Activated CD4-positive, alpha-beta memory T cell treated with anti-CD3 and anti-CD28 coated beads, Interleukin-2, amount 10 ng/mL, durations not matched to agents 7 days and 5 days (primary cell): ENCODE measurements at regions of chr2 and their contacts with region 1.

Region 1: GRCh38 chr2:174341286-174341994 is 6.7 kb downstream of the SP9 start:
- DNase-seq: peak; percentile 89
- H3K4me3 Mint-ChIP-seq: peak overlapping the region; percentile 68
- H3K27ac Mint-ChIP-seq: peak overlapping the region; percentile 64
- H3K4me1 Mint-ChIP-seq: peaks cover 41% of the 10 kb centered on the region
- H3K27me3 Mint-ChIP-seq: peaks cover 71% of the 10 kb centered on the region

Region 2: DNA sequence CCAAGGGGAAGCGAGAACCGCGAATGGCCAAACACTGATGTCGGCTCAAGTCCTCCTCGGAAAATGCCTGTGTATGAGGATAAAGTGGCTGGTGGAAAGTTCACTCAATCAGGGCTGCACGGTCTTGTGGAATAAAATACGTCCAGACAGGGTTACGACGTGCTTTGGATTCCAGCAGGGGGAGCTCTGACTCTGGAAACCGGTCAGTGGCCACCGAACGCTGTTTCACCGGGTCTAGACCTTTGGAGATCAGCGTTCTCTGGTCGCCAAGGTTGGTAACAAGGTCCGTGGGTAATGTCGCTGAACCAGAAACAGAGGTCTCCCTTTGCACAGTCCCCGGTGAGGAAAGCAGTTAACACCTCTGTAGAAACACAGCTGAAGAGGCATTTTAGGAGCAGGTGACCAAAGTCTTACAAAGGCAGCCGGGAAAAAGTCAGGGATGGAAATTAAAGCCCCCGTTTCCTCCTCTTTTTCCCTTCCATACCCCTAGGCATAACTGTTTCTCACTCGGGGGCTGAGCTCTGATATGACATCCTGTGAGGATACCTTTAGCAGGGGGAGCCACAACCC is 939.0 kb before region 1 on chr2:
- CTCF ChIA-PET with region 1: interaction called, 30 read pairs
- POLR2A ChIA-PET with region 1: no interaction called
- DNase-seq: peak; percentile 75
- H3K4me3 Mint-ChIP-seq: no peak overlapping the region
- H3K27ac Mint-ChIP-seq: no peak overlapping the region
- H3K4me1 Mint-ChIP-seq: peaks cover 8% of the 10 kb centered on the region
- H3K27me3 Mint-ChIP-seq: peaks cover 67% of the 10 kb centered on the region

Region 3: GRCh38 chr2:174158003-174158402 is 183.4 kb before region 1 on chr2:
- CTCF ChIA-PET with region 1: interaction called, 13 read pairs
- POLR2A ChIA-PET with region 1: no interaction called
- DNase-seq: peak; percentile 28
- H3K4me3 Mint-ChIP-seq: no peak overlapping the region
- H3K27ac Mint-ChIP-seq: no peak overlapping the region
- H3K4me1 Mint-ChIP-seq: peaks cover 1% of the 10 kb centered on the region
- H3K27me3 Mint-ChIP-seq: no peaks in the 10 kb centered on the region

Region 4: DNA sequence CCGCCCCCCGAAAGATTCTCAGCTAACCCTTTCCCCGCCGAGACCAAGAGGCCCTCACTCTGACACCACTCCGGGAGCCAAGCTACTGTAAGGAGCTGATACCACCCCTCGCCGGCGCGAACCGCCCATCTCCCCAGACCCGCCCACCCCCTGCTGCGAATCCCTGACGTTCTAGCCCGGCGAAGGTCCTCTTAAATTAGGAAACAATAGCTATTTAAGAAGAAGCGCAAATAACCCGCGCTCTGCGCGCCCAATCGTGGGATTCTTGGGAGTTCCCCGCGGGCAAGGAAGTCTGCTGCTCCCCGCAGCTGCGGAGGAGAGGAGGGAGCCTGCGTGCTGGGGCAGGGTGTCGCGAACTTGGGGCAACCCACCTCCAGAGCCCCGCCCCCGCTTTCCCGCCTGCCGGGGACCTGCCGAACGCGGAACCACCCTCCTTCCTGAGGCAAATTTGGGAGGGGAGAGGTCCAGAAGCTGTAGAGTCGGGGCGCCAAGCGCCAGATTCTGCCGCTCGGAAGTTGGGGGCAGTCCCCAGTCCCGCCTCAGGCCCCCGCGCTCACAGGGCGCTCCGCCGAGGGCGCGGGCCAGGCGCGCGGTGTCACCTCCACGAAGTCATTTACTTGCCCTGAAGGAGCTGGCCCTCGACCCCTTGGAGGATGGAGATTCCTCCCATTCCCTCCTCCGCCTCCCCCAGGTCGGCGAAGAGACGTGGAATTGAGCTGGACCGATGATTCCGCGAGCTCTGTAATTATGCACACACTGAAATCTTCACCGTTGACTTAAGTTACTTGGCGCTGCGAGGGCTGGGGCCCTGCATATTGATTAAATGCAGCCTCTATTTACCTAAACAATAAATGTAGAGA is 15.0 kb before region 1 on chr2:
- CTCF ChIA-PET with region 1: interaction called, 26 read pairs
- POLR2A ChIA-PET with region 1: interaction called, 5 read pairs
- DNase-seq: no peak
- H3K4me3 Mint-ChIP-seq: peak overlapping the region; percentile 59
- H3K27ac Mint-ChIP-seq: peak overlapping the region; percentile 41
- H3K4me1 Mint-ChIP-seq: peaks cover 19% of the 10 kb centered on the region
- H3K27me3 Mint-ChIP-seq: peaks cover 80% of the 10 kb centered on the region

Region 5: DNA sequence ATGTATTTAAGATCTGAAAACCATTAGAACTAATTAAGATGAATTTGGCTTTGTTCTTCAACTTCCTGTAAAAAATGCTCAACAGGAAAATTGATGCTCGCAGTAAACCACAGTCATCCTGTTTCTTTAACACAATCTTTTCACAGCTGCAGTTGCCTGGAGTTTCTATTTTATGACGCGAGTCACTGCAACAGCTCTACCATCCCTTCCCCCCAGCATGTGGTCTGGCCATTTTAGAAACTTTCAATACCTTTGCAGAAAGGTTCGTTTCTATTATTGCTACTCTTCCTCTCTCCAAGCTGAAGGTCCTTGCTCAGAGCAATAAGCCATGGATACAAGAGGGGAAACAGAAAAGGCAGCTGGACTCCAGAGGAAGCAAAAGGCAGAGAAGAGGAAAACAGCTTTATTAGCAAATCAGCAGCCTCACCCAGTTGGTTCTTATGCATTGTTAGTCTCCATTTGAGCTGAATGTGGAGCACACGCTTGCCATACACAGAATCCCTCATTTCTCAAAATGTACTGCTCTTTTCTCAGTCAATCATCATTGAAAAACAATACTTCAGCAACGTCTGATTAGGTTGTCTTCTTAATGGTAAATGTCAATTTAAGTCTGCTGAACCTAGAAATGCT is 252.2 kb after region 1 on chr2:
- CTCF ChIA-PET with region 1: no interaction called
- POLR2A ChIA-PET with region 1: no interaction called
- DNase-seq: peak; percentile 79
- H3K4me3 Mint-ChIP-seq: peak overlapping the region; percentile 86
- H3K27ac Mint-ChIP-seq: peak overlapping the region; percentile 96
- H3K4me1 Mint-ChIP-seq: peaks cover 55% of the 10 kb centered on the region
- H3K27me3 Mint-ChIP-seq: no peaks in the 10 kb centered on the region